Thyroid gland (tissue), 4 donors: ENCODE measurements at regions of chr7 and their contacts with region 1.

Region 1: DNA sequence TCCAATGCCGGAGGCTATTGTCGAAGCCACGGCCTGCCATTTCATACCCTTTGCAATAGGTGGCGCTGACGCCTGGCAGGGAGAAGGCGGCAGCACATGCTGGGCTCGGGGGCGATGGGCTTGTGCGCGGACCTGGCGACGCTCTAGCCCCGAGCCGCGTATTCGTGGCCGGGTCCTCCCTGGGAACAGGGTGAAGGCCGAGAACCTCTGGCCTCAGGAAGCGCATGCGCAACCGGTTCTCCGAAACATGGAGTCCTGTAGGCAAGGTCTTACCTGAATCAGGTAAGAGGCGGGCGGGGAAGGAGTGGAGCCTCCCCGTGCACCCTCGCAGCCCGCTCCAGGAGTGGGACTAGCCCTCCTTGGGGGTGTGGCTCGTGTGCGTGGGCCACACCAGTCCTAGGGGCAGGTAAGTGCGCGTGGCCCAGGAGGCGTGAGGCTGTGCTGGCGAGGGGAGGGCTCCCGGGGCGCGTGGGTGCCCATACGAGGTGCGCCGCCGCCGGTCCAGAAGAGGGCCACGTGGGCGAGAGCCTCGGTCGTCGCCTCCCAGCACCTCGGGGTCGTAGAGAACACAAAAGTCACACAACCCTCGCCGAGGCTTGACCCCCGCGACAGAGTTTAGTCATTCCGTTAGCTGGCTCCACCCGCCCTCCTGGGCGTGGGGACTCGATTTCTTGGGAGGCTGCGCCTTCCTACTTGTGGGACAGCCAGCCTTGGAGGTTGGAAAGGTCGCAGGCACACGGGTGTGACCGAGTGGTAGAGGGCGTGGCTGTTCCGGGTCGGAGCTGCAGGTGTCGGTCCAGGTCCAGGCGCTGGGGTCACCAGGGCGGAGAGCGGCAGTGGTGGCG is 5.5 kb upstream of the MEST start:
- DNase-seq: peak; percentile 88 to 91
- H3K4me3 ChIP-seq: peak overlapping the region in 2 of 3 donors; percentile 50 to 63
- H3K27ac ChIP-seq: peak overlapping the region; percentile 53 to 75 (median 68)
- H3K4me1 ChIP-seq: no peaks in the 10 kb centered on the region
- H3K27me3 ChIP-seq: no peaks in the 10 kb centered on the region
- CTCF ChIP-seq: peak; percentile 53 to 90 (median 74)
- POLR2A ChIP-seq: no peak

Region 2: GRCh38 chr7:130277763-130278643 is 208.3 kb before region 1 on chr7:
- intact Hi-C with region 1: loop called (anchors 10 kb)
- DNase-seq: peak; percentile 52 to 58
- H3K4me3 ChIP-seq: no peak overlapping the region
- H3K27ac ChIP-seq: no peak overlapping the region
- H3K4me1 ChIP-seq: peaks cover 0 to 2% of the 10 kb centered on the region in 2 donors
- H3K27me3 ChIP-seq: no peaks in the 10 kb centered on the region
- CTCF ChIP-seq: peak in 5 of 6 experiments; percentile 21 to 68 (median 53)
- POLR2A ChIP-seq: no peak

Region 3: DNA sequence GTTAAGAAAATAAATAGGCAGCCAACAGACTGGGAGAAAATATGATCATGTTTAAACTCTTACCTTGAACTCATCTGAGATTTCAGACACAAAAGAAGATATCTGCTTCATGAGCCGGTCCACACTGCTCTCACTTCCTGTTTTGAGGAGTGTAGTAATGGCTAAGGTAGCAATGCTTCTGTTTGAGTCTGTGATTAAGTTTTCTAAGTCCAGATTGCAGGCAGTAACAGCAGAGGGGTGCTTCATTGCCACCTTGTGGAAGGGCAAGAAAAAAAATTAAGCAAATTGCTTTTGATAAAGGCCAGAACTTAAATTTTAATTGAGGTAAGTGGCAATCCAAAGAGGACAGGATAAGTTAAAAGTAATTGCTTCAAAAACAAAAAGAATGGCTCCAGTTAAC is 74.6 kb after region 1 on chr7:
- intact Hi-C with region 1: no loop called
- DNase-seq: no peak
- H3K4me3 ChIP-seq: no peak overlapping the region
- H3K27ac ChIP-seq: no peak overlapping the region
- H3K4me1 ChIP-seq: no peaks in the 10 kb centered on the region
- H3K27me3 ChIP-seq: no peaks in the 10 kb centered on the region
- CTCF ChIP-seq: no peak
- POLR2A ChIP-seq: no peak